ENCODE measurements at regions of chr13 and their contacts with region 1.

Region 1: DNA sequence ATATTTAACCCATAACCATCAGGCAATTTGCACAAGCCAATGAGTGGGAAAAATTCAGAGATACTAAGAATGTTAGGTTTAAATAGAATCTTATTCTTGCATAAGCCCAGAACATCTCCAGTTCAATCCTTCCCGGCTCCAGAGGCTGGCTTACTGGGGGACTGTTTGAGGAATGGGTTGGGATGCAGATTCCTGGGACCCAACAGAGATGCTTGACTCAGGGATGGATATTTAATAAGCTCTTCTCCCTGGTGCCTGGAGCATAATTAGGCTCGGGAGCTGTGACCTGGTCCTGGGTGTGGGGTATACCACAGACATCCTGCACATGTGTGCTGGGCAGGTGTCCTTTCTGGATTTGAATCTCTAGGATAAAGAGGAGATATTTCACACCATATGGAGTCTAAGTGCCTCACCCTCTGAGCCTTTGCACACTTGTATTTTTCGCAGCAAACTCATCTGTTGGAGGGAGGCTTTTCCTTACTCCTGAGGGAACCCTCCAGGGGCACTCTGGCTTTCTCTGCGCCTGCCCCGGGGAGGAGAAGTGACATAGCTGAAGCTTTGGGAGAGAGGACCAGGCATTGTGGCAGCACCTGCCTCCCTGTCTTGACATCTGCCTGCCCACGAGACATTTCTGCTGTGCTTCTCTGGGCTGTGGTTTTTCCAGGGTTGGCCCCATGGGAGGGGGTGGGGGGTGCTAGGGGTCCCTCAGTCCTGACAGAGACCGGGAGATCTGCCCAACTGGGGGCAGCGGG is 36.1 kb upstream of the ANKRD10 start:
- DNase-seq: no peak
- H3K4me3 ChIP-seq: no peak overlapping the region
- H3K27ac ChIP-seq: no peak overlapping the region
- H3K4me1 ChIP-seq: no peaks in the 10 kb centered on the region
- H3K27me3 ChIP-seq: no peaks in the 10 kb centered on the region
- CTCF ChIP-seq: no peak
- POLR2A ChIP-seq: no peak

Region 2: DNA sequence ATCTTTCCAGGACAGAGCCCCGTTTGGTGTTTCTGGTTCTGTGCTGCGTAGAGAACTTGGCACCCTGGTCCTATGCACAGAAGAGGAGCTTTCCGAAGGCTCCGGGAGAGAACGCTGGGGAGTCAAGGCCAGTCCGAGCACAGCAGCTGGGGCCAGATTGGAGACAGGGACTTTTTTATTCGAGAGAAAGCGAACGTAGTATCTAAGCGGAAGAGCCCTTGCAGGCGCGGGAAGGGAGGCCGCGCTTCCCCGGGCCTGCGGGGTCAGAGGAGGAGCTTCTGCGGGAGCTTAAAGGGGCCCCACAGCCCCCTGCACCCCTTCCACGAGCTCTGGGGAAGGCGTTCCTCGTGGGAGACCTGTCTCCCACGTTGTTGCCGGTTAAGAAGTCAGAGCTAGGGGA is 115.5 kb after region 1 on chr13:
- intact Hi-C with region 1: no loop called
- DNase-seq: peak; percentile 89
- H3K4me3 ChIP-seq: peak overlapping the region; percentile 58 to 77
- H3K27ac ChIP-seq: peak overlapping the region; percentile 90 to 92
- H3K4me1 ChIP-seq: peaks cover 8% of the 10 kb centered on the region
- H3K27me3 ChIP-seq: no peaks in the 10 kb centered on the region
- CTCF ChIP-seq: no peak
- POLR2A ChIP-seq: no peak

Region 3: DNA sequence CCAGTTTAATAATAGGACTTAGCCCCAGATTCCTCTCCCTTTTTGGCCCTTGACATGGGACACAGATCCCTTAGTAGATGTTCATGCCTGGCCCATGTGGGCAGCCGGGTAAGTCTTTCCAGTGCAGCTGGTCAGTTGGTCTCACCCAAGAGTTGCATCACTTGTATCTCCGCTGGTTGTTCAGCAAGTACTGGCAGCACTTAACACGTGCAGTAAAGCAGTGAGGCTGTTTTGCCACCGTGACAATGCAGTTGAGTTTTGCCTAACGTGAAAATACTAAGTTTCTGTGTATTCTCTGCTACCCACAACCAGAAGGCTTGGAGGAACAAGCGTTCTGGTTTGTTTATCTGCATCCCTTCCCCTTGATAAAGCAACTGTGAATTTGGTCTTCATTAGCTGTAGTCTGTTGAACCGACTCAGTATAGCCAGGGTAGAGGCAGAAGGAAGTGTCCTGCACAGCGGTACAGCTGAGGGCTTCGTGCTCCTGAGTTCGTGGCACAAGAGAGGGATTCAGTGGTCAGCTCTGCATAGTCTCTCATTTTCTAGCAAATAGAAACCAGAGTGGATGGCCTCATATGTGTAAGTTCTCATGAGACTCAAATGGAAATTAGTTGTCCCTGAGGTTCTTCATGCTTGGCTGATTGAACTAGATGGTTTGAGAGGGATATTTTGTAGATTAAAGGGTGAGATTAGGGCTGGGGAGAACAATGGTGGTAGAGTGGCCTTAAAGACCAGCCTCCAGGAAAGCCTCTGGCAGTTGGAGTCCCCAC is 214.4 kb after region 1 on chr13:
- intact Hi-C with region 1: no loop called
- DNase-seq: no peak
- H3K4me3 ChIP-seq: no peak overlapping the region
- H3K27ac ChIP-seq: no peak overlapping the region
- H3K4me1 ChIP-seq: no peaks in the 10 kb centered on the region
- H3K27me3 ChIP-seq: no peaks in the 10 kb centered on the region
- CTCF ChIP-seq: no peak
- POLR2A ChIP-seq: no peak

Region 4: GRCh38 chr13:112397108-112397507 is 1446.1 kb after region 1 on chr13:
- intact Hi-C with region 1: loop called (anchors 5 kb)
- DNase-seq: no peak
- H3K4me3 ChIP-seq: no peak overlapping the region
- H3K27ac ChIP-seq: no peak overlapping the region
- H3K4me1 ChIP-seq: no peaks in the 10 kb centered on the region
- H3K27me3 ChIP-seq: no peaks in the 10 kb centered on the region
- CTCF ChIP-seq: no peak
- POLR2A ChIP-seq: no peak